Activated CD4-positive, alpha-beta memory T cell treated with anti-CD3 and anti-CD28 coated beads for 36 hours (primary cell): ENCODE measurements at regions of chr2 and their contacts with region 1.

Region 1: DNA sequence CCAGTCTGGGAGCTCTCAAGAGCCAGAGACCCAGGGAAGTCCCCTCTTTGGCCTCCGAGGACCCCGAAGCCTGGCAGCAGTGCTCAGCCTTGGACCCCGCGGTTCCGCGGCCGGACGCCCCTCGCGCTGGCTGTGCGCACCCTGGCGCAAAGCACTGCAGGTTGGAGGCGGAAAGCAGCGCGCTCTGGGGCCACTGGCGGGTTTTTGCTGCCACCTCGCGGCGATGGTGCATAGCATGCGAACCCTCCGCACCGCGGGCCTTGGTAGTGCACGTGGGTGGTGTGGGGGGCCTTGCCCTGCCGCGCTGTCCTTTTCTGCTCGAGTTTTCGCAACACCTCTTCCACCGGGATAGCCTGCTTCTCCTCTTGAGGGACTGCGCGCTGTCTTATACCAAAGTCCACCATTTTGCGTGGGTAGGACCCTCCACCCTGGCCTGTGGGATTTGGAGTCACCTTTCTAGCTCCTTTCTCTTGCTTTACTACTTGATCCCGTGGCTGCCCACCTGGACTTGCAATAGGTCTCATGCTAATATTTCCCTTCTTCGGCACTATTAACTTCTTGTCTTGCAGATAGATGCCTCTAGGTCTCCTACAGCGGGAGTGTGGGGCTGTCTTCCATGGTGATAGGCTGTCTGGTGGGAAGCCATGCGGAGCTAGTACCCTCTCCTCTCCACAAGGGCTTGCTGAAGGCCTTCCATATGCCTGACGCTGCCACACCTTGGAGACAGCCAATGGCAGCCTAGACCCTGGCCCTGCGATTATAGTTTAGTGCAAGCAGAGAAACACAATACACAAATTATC is 14.3 kb downstream of the SIX3 start:
- DNase-seq: peak; percentile 83
- H3K4me3 Mint-ChIP-seq: no peak overlapping the region
- H3K27ac Mint-ChIP-seq: no peak overlapping the region
- H3K4me1 Mint-ChIP-seq: peaks cover 9% of the 10 kb centered on the region
- H3K27me3 Mint-ChIP-seq: peaks cover 47% of the 10 kb centered on the region

Region 2: GRCh38 chr2:44244129-44244871 is 711.5 kb before region 1 on chr2:
- CTCF ChIA-PET with region 1: interaction called, 5 read pairs
- POLR2A ChIA-PET with region 1: no interaction called
- intact Hi-C with region 1: loop called (anchors 2 kb)
- DNase-seq: peak; percentile 64
- H3K4me3 Mint-ChIP-seq: peak overlapping the region; percentile 66
- H3K27ac Mint-ChIP-seq: no peak overlapping the region
- H3K4me1 Mint-ChIP-seq: peaks cover 12% of the 10 kb centered on the region
- H3K27me3 Mint-ChIP-seq: no peaks in the 10 kb centered on the region

Region 3: DNA sequence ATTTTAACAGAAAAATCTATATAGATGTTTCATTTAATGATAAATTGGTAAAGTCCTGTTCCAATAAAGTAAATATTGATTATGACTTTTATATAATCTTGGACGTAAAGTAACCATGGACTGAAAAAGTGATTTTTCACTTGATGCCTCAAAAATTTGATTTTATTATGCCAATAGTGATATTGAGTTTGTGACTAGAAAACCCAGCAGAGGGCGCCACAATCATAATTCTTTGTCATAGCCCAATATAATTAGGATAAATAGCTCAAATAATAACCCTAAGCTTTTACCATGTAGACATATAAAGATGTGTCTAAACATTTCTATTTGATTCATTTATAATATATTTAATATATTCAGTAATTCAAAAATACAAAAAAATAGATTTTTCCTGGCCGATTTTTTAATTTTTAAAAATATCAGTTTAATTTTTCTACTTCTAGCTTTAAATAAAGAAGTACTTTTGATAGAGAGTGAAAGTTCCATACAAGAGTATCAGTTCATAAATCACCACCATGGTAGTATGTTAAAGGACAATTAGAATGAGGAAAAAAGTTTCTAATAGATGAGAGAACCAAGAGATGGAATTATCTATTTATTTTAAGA is 563.4 kb before region 1 on chr2:
- CTCF ChIA-PET with region 1: interaction called, 74 read pairs
- POLR2A ChIA-PET with region 1: no interaction called
- intact Hi-C with region 1: loop called (anchors 1 kb)
- DNase-seq: peak; percentile 41
- H3K4me3 Mint-ChIP-seq: no peak overlapping the region
- H3K27ac Mint-ChIP-seq: no peak overlapping the region
- H3K4me1 Mint-ChIP-seq: peaks cover 2% of the 10 kb centered on the region
- H3K27me3 Mint-ChIP-seq: no peaks in the 10 kb centered on the region

Region 4: DNA sequence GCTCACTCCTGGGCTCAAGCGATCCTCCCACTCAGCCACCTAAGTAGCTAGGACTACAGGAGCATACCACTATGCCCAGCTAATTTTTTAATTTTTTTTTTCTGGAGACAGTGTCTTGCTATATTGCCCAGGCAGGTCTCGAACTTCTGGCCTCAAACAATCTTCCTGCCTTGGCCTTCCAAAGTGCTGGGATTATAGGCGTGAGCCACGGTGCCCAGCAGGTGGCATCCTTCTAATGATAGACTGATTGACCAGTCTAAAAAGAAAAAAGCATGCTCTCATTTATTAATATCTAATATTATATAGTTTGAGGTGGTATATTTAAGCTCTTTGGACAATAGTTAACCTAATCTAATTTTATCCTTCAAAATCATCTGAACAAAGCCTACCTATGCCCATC is 395.4 kb before region 1 on chr2:
- CTCF ChIA-PET with region 1: interaction called, 23 read pairs
- POLR2A ChIA-PET with region 1: no interaction called
- intact Hi-C with region 1: loop called (anchors 10 kb)
- DNase-seq: peak; percentile 18
- H3K4me3 Mint-ChIP-seq: no peak overlapping the region
- H3K27ac Mint-ChIP-seq: no peak overlapping the region
- H3K4me1 Mint-ChIP-seq: no peaks in the 10 kb centered on the region
- H3K27me3 Mint-ChIP-seq: no peaks in the 10 kb centered on the region

Region 5: DNA sequence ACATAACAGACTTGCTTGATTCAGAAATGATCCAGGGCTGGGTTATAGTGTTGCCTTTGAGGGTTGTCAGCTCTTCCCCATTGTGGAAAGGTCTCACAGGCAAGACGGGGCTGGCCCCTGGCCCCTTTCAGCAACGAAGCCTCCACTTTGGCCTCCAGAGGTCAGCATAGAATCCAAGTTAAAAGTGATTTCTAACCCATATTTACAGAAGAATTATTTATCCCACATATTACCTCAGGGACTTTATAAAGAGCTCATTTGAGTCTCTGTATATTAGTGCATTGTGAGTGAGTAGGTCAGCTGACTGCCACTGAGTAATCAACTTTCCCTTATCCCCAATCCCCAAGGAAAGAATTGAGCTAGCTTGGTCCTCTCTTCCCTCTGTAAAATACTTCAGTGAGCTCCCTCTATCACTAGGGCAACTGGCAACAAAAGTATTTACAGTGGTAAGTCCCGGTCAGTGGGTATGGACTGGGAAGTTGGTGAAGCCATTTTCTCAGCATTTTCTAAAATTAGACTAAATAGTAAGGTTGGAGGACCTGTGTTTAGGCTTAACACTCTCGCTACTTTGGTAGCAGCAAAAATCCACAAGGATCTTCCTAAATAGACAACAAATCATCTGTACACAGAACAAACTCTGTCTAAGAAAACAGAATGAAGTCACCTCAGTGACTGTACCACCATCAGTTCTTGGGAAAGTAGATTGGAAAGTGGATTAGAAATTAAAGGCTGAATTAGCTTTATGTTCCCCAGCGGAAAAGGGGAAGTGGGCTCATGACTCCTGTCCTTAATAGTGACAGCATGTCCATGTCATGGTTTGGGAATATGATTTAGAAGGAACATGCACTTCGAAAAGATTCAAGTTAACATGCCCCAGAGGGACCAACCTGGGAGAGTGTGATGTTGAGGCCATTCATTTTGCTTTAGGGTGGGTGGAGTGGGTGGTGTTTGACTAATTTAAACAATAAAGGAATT is 185.3 kb before region 1 on chr2:
- CTCF ChIA-PET with region 1: interaction called, 10 read pairs
- POLR2A ChIA-PET with region 1: no interaction called
- intact Hi-C with region 1: no loop called
- DNase-seq: no peak
- H3K4me3 Mint-ChIP-seq: no peak overlapping the region
- H3K27ac Mint-ChIP-seq: no peak overlapping the region
- H3K4me1 Mint-ChIP-seq: no peaks in the 10 kb centered on the region
- H3K27me3 Mint-ChIP-seq: peaks cover 5% of the 10 kb centered on the region

Region 6: GRCh38 chr2:44941551-44942234 is 14.1 kb before region 1 on chr2 and contains the start of gene SIX3:
- CTCF ChIA-PET with region 1: interaction called, 20 read pairs
- POLR2A ChIA-PET with region 1: no interaction called
- intact Hi-C with region 1: loop called (anchors 2 kb)
- DNase-seq: peak; percentile 63
- H3K4me3 Mint-ChIP-seq: peak within 1 kb of the TSS; percentile 70
- H3K27ac Mint-ChIP-seq: no peak within 1 kb of the TSS
- H3K4me1 Mint-ChIP-seq: peaks cover 37% of the 10 kb centered on the region
- H3K27me3 Mint-ChIP-seq: peaks cover 75% of the 10 kb centered on the region
- total RNA-seq, gene SIX3: not detected